ENCODE measurements at regions of chr17 and their contacts with region 1.

Region 1: DNA sequence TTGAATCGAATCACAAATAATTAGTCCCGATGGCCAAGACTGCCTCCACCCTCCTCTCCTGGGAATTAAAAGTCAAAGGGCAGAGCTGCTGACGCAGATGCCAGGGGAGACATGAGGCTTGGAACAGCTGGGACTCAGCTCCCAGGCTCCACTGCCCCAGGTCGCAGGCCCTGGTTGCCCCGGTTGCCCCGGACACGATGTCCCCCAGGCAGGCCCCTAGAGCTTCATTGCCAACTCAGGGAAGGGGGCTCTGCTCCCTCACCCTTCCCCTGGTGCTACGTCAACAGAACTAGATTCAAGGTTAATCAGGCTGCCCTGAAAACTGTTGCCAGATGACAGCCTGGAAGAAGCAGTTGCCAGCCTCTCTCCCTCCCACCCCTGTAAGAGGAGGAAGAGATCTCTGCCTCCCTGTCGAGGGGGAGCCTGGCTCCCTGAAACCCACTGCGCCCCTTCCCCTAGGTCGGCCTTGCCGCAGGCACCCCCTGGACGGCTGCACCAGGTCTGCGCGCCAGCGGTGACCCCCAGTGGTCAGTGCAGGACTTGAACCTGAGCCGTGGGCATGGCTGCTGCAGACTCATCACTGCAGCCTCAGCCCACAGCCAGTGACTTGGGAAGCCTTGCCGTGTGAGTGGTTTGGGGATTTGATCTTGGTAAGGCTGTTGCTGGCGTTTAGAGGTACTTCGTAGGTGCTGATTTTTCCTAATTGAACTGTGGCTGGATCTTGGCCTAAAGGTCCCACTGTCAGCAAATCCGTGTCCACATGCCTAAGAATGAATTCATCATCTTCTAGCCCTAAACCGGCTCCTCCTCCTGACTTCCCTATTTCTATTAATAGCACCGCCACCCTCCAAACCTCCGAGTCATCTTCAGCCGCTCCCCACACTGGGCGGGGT is 84.1 kb upstream of the TOB1 start:
- DNase-seq: peak; percentile 87 to 97
- ATAC-seq: peak; percentile 55 to 70
- H3K4me3 ChIP-seq: peak overlapping the region; percentile 4 to 32 (median 21)
- H3K27ac ChIP-seq: peak overlapping the region; percentile 98 to 100 (median 100)
- H3K4me1 ChIP-seq: peaks cover 59 to 70% of the 10 kb centered on the region in 2 donors
- H3K27me3 ChIP-seq: no peaks in the 10 kb centered on the region
- CTCF ChIP-seq: peak; percentile 79 to 96 (median 86)
- POLR2A ChIP-seq: peak; percentile 29 to 47

Region 2: DNA sequence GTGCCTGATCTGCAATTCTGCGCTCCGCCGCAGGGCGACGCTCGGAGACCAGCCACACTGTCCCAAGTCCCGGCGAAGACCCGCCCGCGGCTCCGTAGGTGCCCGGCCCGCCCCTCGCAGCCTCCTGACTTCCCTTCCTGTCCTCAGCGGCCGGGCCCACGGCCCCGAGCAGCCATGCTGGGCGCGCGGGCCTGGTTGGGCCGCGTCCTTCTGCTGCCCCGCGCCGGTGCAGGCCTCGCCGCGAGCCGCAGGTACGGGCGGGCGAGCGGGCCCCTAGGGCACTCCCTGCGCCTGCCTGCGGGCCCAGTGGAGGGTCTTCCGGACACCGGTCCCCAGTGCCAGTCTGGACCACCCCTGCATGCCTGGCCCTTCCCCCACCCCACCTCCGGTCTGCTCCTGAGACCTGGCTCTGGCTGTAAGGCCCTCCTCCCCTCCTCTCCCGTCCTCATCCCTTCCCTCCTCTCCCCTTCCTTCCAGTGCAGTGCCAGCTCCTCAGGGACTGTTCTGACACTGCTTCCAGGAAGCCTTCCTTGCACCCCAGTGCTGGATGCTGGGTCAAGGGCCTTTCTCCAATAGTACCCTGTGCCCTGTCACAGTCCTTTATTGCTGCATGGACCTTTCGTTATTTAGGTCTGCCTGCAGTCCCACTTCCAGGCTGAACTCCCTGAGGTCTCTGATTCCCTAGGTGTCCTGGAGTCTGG is 403.1 kb before region 1 on chr17 and contains the start of gene SPATA20:
- in situ Hi-C with region 1: loop called in 1 of 4 experiments (anchors 10 kb)
- intact Hi-C with region 1: loop called (anchors 5 kb)
- DNase-seq: peak; percentile 87 to 90
- ATAC-seq: peak; percentile 77 to 80
- H3K4me3 ChIP-seq: peak within 1 kb of the TSS; percentile 61 to 71 (median 67)
- H3K27ac ChIP-seq: peak within 1 kb of the TSS; percentile 76 to 84 (median 82)
- H3K4me1 ChIP-seq: peaks cover 16 to 21% of the 10 kb centered on the region in 2 donors
- H3K27me3 ChIP-seq: no peaks in the 10 kb centered on the region
- CTCF ChIP-seq: peak; percentile 96 to 100 (median 98)
- POLR2A ChIP-seq: peak; percentile 70 to 84
- total RNA-seq, gene SPATA20: 22.3 to 67.9 (median 29.1) TPM

Region 3: DNA sequence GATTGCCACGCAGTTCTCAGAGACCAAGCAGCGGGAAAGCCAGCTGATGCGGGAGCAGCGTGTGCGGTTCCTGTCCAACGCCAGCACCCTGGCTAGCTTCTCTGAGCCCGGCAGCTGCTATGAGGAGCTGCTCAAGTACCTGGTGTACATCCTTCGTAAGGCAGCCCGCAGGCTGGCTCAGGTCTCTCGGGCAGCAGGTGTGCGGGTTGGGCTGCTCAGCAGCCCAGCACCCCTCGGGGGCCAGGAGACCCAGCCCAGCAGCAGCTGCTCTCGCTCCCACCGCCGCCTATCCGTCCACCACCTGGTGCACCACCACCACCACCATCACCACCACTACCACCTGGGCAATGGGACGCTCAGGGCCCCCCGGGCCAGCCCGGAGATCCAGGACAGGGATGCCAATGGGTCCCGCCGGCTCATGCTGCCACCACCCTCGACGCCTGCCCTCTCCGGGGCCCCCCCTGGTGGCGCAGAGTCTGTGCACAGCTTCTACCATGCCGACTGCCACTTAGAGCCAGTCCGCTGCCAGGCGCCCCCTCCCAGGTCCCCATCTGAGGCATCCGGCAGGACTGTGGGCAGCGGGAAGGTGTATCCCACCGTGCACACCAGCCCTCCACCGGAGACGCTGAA is 374.5 kb before region 1 on chr17:
- in situ Hi-C with region 1: no loop called
- intact Hi-C with region 1: no loop called
- DNase-seq: no peak
- ATAC-seq: no peak
- H3K4me3 ChIP-seq: no peak overlapping the region
- H3K27ac ChIP-seq: no peak overlapping the region
- H3K4me1 ChIP-seq: no peaks in the 10 kb centered on the region
- H3K27me3 ChIP-seq: no peaks in the 10 kb centered on the region
- CTCF ChIP-seq: no peak
- POLR2A ChIP-seq: no peak

Region 4: DNA sequence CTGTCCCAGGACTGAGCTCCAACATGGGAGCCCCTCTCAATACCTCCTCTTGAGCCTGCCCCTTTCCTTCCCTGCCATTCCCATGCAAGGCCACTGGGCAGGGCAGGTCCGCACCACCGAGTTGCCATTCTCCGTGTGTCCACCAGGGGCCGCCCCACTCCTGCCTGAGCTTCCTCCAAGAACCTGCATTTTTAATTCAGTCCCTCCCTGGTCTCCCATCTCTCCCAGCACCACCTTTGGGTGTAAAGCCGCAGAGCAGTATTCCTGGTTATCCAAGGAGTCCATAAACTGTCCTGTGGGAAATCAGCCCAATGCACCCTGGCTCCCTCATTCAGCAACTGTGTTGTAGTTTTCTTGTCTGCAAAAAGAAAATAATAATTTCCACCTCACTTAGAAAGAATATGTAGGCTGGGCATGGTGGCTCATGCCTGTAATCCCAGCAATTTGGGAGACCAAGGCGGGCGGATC is 167.0 kb before region 1 on chr17:
- in situ Hi-C with region 1: loop called in 2 of 4 experiments (anchors 5 to 10 kb)
- intact Hi-C with region 1: no loop called
- DNase-seq: peak; percentile 62 to 76
- ATAC-seq: peak; percentile 73 to 92
- H3K4me3 ChIP-seq: no peak overlapping the region
- H3K27ac ChIP-seq: no peak overlapping the region
- H3K4me1 ChIP-seq: no peaks in the 10 kb centered on the region
- H3K27me3 ChIP-seq: no peaks in the 10 kb centered on the region
- CTCF ChIP-seq: peak; percentile 95 to 99 (median 97)
- POLR2A ChIP-seq: no peak

Region 5: GRCh38 chr17:50865984-50866774 is 84.1 kb before region 1 on chr17 and contains the start of gene TOB1:
- in situ Hi-C with region 1: loop called in 3 of 4 experiments (anchors 5 kb)
- intact Hi-C with region 1: loop called (anchors 1 kb)
- DNase-seq: peak; percentile 98 to 99
- ATAC-seq: peak; percentile 68
- H3K4me3 ChIP-seq: peak within 1 kb of the TSS; percentile 67 to 98 (median 84)
- H3K27ac ChIP-seq: peak within 1 kb of the TSS; percentile 98 to 100 (median 99)
- H3K4me1 ChIP-seq: peaks cover 34 to 51% of the 10 kb centered on the region in 2 donors
- H3K27me3 ChIP-seq: no peaks in the 10 kb centered on the region
- CTCF ChIP-seq: no peak
- POLR2A ChIP-seq: peak; percentile 99
- total RNA-seq, gene TOB1: 13.6 to 53.5 (median 28.2) TPM

Region 6: GRCh38 chr17:51153210-51154072 is 203.2 kb after region 1 on chr17 and contains the start of gene NME1:
- in situ Hi-C with region 1: no loop called
- intact Hi-C with region 1: no loop called
- DNase-seq: peak; percentile 97
- ATAC-seq: peak; percentile 98 to 99
- H3K4me3 ChIP-seq: peak within 1 kb of the TSS; percentile 64 to 77 (median 72)
- H3K27ac ChIP-seq: peak within 1 kb of the TSS; percentile 82 to 90 (median 88)
- H3K4me1 ChIP-seq: peaks cover 17 to 18% of the 10 kb centered on the region in 2 donors
- H3K27me3 ChIP-seq: no peaks in the 10 kb centered on the region
- CTCF ChIP-seq: peak; percentile 70 to 80 (median 78)
- POLR2A ChIP-seq: peak; percentile 34 to 59
- total RNA-seq, gene NME1: 19.1 to 32.6 (median 29.2) TPM